ENCODE measurements at regions of chr10 and their contacts with region 1.

Region 1: GRCh38 chr10:35635576-35635975 is 6.5 kb downstream of the FZD8 start:
- ATAC-seq: peak in 3 of 8 experiments; percentile 76 to 93 (median 84)
- H3K4me3 ChIP-seq: no peak overlapping the region
- H3K27ac ChIP-seq: no peak overlapping the region
- H3K4me1 ChIP-seq: peaks cover 16 to 17% of the 10 kb centered on the region in 2 donors

Region 2: DNA sequence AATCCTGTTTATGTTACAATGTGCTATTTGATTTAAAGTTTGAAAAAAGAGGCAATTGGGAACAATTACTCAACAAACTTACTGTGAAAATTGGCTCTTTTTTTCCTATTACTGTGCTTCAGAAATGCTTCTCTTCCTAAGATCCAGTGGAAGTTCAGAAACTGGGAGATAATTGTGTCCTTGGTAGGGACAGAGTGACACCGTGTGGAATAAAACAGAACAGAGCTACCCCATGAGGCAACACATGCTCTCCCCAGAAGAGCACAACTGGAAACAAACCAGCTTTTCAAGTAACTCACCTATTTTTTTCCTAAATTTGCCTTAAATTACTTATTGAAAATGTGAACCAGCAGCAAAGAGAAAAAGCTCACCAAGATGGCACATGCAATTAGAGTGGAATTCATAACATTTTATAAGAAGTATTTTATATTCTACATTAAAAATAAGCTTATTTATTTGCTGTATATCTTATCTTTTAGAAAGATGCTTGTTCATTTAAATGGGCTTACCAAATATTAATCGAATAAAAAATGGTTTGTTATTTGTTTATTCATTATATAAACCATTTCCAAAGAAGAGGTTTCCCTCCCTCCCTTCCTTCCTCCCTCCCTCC is 1143.8 kb after region 1 on chr10:
- in situ Hi-C with region 1: loop called (anchors 10 to 25 kb)
- ATAC-seq: peak; percentile 68 to 98 (median 90)
- H3K4me3 ChIP-seq: no peak overlapping the region
- H3K27ac ChIP-seq: no peak overlapping the region
- H3K4me1 ChIP-seq: no peaks in the 10 kb centered on the region

Region 3: DNA sequence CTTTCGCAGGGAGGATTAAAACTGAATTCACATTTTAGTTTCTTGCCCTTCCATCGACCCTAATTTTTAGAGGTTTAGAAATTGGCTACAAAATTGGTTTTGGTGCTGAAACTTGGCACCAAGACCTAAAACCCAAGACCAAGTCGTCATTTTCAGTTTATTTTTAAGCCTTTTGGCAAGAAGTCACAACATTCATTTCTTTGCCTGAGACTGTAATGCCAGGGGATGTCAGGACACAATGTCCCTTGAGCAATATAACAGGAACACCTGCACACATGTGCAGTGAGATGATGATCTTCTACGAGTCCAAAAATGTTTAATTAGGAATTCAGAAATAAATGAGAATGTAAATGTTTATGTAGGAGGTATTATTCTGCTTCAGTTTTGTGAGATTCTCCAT is 1154.4 kb after region 1 on chr10:
- in situ Hi-C with region 1: loop called in 8 of 9 experiments (anchors 10 to 25 kb)
- ATAC-seq: no peak
- H3K4me3 ChIP-seq: no peak overlapping the region
- H3K27ac ChIP-seq: no peak overlapping the region
- H3K4me1 ChIP-seq: no peaks in the 10 kb centered on the region

Measured in motor neuron (in vitro differentiated cells).